ENCODE measurements at regions of chr1 and their contacts with region 1.

Region 1: GRCh38 chr1:47313915-47314664 is at the start of gene STIL:
- DNase-seq: peak; percentile 91 to 97 (median 94)
- ATAC-seq: peak; percentile 96 to 97
- H3K4me3 Mint-ChIP-seq: peak within 1 kb of the TSS; percentile 88 to 99 (median 93)
- H3K27ac Mint-ChIP-seq: peak within 1 kb of the TSS; percentile 89 to 99 (median 96)
- H3K4me1 Mint-ChIP-seq: peaks cover 9 to 14% (median 12%) of the 10 kb centered on the region in 4 donors
- H3K27me3 Mint-ChIP-seq: no peaks in the 10 kb centered on the region
- polyA plus RNA-seq, gene STIL: 0.59 to 1.2 (median 0.63) TPM

Region 2: GRCh38 chr1:47325530-47325929 is 11.4 kb after region 1 on chr1:
- POLR2A ChIA-PET with region 1: interaction called, 10 read pairs
- DNase-seq: no peak
- ATAC-seq: no peak
- H3K4me3 Mint-ChIP-seq: no peak overlapping the region
- H3K27ac Mint-ChIP-seq: no peak overlapping the region
- H3K4me1 Mint-ChIP-seq: peaks cover 0 to 2% (median 1%) of the 10 kb centered on the region in 4 donors
- H3K27me3 Mint-ChIP-seq: no peaks in the 10 kb centered on the region

Region 3: DNA sequence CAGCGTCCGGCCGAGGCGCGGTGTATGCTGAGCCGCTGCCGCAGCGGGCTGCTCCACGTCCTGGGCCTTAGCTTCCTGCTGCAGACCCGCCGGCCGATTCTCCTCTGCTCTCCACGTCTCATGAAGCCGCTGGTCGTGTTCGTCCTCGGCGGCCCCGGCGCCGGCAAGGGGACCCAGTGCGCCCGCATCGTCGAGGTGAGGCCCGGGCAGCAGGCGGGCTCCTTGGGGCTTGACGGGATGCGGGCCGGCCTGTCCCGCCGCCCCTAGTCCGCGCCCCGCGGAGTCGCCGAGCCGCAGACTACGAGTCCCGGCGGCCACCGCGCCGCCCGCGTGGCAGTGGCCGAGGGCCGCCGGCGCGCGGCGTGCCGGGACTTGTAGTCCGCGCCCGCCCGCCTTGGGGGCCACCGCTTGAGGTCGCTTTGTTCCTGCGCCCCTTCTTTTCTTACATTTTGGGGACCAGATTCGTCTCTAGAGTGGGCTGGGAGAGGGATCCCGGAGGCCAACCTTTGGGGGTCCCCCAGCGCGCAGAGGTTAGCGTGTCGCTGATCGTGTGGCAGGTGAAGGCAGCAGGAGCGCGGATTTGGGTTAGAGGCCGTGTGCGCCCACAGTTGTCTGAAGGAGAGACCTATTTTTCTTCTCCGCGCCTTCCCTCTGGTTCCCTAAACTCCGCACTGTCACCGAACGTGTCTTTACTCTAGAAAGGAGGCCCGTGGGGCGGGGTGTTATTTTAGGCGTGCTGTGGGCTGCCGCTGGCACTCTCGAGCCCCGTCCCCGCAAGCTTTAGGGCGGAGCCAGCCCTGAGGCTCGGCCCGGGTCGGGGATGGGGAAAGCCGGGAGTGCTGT is 20.1 kb after region 1 on chr1:
- POLR2A ChIA-PET with region 1: interaction called, 37 read pairs
- DNase-seq: peak; percentile 53 to 82 (median 75)
- ATAC-seq: peak; percentile 87 to 92
- H3K4me3 Mint-ChIP-seq: peak overlapping the region in 7 of 10 donors; percentile 88 to 95 (median 92)
- H3K27ac Mint-ChIP-seq: peak overlapping the region; percentile 74 to 96 (median 92)
- H3K4me1 Mint-ChIP-seq: peaks cover 2 to 26% (median 23%) of the 10 kb centered on the region in 4 donors
- H3K27me3 Mint-ChIP-seq: no peaks in the 10 kb centered on the region